CD8-positive, alpha-beta T cell (primary cell): ENCODE measurements at regions of chr17 and their contacts with region 1.

Region 1: DNA sequence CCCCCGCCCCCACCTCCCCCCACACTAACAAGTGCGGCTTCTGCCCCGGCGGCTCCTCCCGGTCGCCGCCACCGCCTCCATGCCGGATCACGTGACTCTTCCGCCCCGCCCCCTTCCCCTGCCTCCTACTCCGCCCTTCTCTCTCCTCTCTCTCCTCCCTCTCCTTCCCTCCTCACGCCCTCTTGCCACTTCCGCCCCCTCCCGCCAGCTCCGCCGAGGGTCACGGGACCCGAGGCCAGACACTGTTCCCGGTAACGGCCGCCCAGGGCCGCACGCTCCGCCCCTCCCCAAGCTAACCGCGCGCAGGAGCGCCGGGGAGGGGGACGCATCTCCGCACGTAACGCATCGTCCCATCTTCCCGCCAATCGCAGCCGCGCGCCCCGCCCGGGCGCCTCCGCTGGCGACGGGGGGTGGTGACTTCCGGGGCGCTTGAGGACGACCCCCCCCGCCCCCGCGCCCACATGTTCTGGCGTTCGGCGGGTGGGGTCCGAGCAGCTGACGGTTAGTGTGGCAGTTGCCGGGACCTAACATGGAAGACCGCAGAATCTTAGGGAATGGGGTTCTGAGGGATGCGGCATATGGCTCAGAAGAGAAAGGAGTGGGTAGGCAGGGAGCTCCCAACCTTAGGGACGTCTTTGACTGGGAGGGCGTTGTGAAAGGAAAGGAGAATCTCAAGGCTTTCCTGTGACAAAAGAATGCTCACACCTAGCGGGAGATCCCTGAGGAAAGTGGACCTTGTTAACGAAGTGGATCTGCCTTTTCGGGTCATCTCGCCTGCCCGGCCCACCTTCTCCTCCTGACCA is at the start of gene USP32:
- DNase-seq: peak; percentile 93 to 99 (median 97)
- ATAC-seq: peak; percentile 87
- H3K4me3 ChIP-seq: peak within 1 kb of the TSS; percentile 86 to 93
- H3K4me3 Mint-ChIP-seq: peak within 1 kb of the TSS; percentile 95
- H3K27ac ChIP-seq: peak within 1 kb of the TSS; percentile 89 to 90
- H3K27ac Mint-ChIP-seq: peak within 1 kb of the TSS; percentile 93
- H3K4me1 ChIP-seq: peaks cover 18% of the 10 kb centered on the region
- H3K4me1 Mint-ChIP-seq: peaks cover 38% of the 10 kb centered on the region
- H3K27me3 ChIP-seq: no peaks in the 10 kb centered on the region
- H3K27me3 Mint-ChIP-seq: no peaks in the 10 kb centered on the region
- CTCF ChIP-seq: no peak
- total RNA-seq, gene USP32: 24.7 to 26.3 TPM

Region 2: GRCh38 chr17:59619293-59620063 is 772.8 kb before region 1 on chr17 and contains the start of gene CLTC:
- CTCF ChIA-PET with region 1: no interaction called
- POLR2A ChIA-PET with region 1: no interaction called
- intact Hi-C with region 1: loop called in 1 of 2 experiments (anchors 10 kb)
- DNase-seq: peak; percentile 83 to 98 (median 90)
- ATAC-seq: peak; percentile 82
- H3K4me3 ChIP-seq: peak within 1 kb of the TSS; percentile 98 to 99
- H3K4me3 Mint-ChIP-seq: peak within 1 kb of the TSS; percentile 96
- H3K27ac ChIP-seq: peak within 1 kb of the TSS; percentile 91 to 99
- H3K27ac Mint-ChIP-seq: peak within 1 kb of the TSS; percentile 98
- H3K4me1 ChIP-seq: peaks cover 37% of the 10 kb centered on the region
- H3K4me1 Mint-ChIP-seq: peaks cover 48% of the 10 kb centered on the region
- H3K27me3 ChIP-seq: no peaks in the 10 kb centered on the region
- H3K27me3 Mint-ChIP-seq: no peaks in the 10 kb centered on the region
- CTCF ChIP-seq: no peak
- total RNA-seq, gene CLTC: 73.4 to 86.0 TPM

Region 3: GRCh38 chr17:59892924-59893676 is 499.1 kb before region 1 on chr17 and contains the starts of genes RPS6KB1 and TUBD1:
- CTCF ChIA-PET with region 1: no interaction called
- POLR2A ChIA-PET with region 1: no interaction called
- intact Hi-C with region 1: loop called in 1 of 2 experiments (anchors 10 kb)
- DNase-seq: peak; percentile 94 to 100 (median 97)
- ATAC-seq: peak; percentile 91
- H3K4me3 ChIP-seq: peak within 1 kb of the TSS; percentile 66 to 82
- H3K4me3 Mint-ChIP-seq: peak within 1 kb of the TSS; percentile 100
- H3K27ac ChIP-seq: peak within 1 kb of the TSS; percentile 89 to 93
- H3K27ac Mint-ChIP-seq: peak within 1 kb of the TSS; percentile 100
- H3K4me1 ChIP-seq: peaks cover 37% of the 10 kb centered on the region
- H3K4me1 Mint-ChIP-seq: peaks cover 56% of the 10 kb centered on the region
- H3K27me3 ChIP-seq: no peaks in the 10 kb centered on the region
- H3K27me3 Mint-ChIP-seq: no peaks in the 10 kb centered on the region
- CTCF ChIP-seq: no peak
- total RNA-seq, gene RPS6KB1: 153 to 171 TPM
- total RNA-seq, gene TUBD1: 9.7 to 11.0 TPM

Region 4: GRCh38 chr17:60372790-60373483 is 19.3 kb before region 1 on chr17:
- CTCF ChIA-PET with region 1: no interaction called
- POLR2A ChIA-PET with region 1: no interaction called
- intact Hi-C with region 1: no loop called
- DNase-seq: no peak
- ATAC-seq: no peak
- H3K4me3 ChIP-seq: no peak overlapping the region
- H3K4me3 Mint-ChIP-seq: no peak overlapping the region
- H3K27ac ChIP-seq: no peak overlapping the region
- H3K27ac Mint-ChIP-seq: no peak overlapping the region
- H3K4me1 ChIP-seq: no peaks in the 10 kb centered on the region
- H3K4me1 Mint-ChIP-seq: peaks cover 16% of the 10 kb centered on the region
- H3K27me3 ChIP-seq: no peaks in the 10 kb centered on the region
- H3K27me3 Mint-ChIP-seq: no peaks in the 10 kb centered on the region
- CTCF ChIP-seq: no peak

Region 5: GRCh38 chr17:60421273-60421934 is 29.2 kb after region 1 on chr17:
- CTCF ChIA-PET with region 1: interaction called, 3 read pairs
- POLR2A ChIA-PET with region 1: interaction called, 3 read pairs
- intact Hi-C with region 1: loop called (anchors 1 to 2 kb)
- DNase-seq: peak; percentile 50 to 84 (median 71)
- ATAC-seq: peak; percentile 93
- H3K4me3 ChIP-seq: peak overlapping the region; percentile 52 to 60
- H3K4me3 Mint-ChIP-seq: peak overlapping the region; percentile 83
- H3K27ac ChIP-seq: peak overlapping the region; percentile 24 to 40
- H3K27ac Mint-ChIP-seq: peak overlapping the region; percentile 72
- H3K4me1 ChIP-seq: peaks cover 8% of the 10 kb centered on the region
- H3K4me1 Mint-ChIP-seq: peaks cover 6% of the 10 kb centered on the region
- H3K27me3 ChIP-seq: no peaks in the 10 kb centered on the region
- H3K27me3 Mint-ChIP-seq: peaks cover 2% of the 10 kb centered on the region
- CTCF ChIP-seq: peak; percentile 100

Region 6: GRCh38 chr17:60535463-60535862 is 143.2 kb after region 1 on chr17:
- CTCF ChIA-PET with region 1: no interaction called
- POLR2A ChIA-PET with region 1: no interaction called
- intact Hi-C with region 1: no loop called
- DNase-seq: no peak
- ATAC-seq: no peak
- H3K4me3 ChIP-seq: no peak overlapping the region
- H3K4me3 Mint-ChIP-seq: no peak overlapping the region
- H3K27ac ChIP-seq: no peak overlapping the region
- H3K27ac Mint-ChIP-seq: no peak overlapping the region
- H3K4me1 ChIP-seq: no peaks in the 10 kb centered on the region
- H3K4me1 Mint-ChIP-seq: no peaks in the 10 kb centered on the region
- H3K27me3 ChIP-seq: no peaks in the 10 kb centered on the region
- H3K27me3 Mint-ChIP-seq: peaks cover 2% of the 10 kb centered on the region
- CTCF ChIP-seq: no peak

Region 7: GRCh38 chr17:60599620-60600489 is 207.6 kb after region 1 on chr17 and contains the start of gene PPM1D:
- CTCF ChIA-PET with region 1: no interaction called
- POLR2A ChIA-PET with region 1: no interaction called
- intact Hi-C with region 1: loop called in 1 of 2 experiments (anchors 1 kb)
- DNase-seq: peak; percentile 92 to 99 (median 98)
- ATAC-seq: peak; percentile 93
- H3K4me3 ChIP-seq: peak within 1 kb of the TSS; percentile 84 to 97
- H3K4me3 Mint-ChIP-seq: peak within 1 kb of the TSS; percentile 94
- H3K27ac ChIP-seq: peak within 1 kb of the TSS; percentile 76 to 96
- H3K27ac Mint-ChIP-seq: peak within 1 kb of the TSS; percentile 94
- H3K4me1 ChIP-seq: peaks cover 11% of the 10 kb centered on the region
- H3K4me1 Mint-ChIP-seq: peaks cover 38% of the 10 kb centered on the region
- H3K27me3 ChIP-seq: no peaks in the 10 kb centered on the region
- H3K27me3 Mint-ChIP-seq: no peaks in the 10 kb centered on the region
- CTCF ChIP-seq: no peak
- total RNA-seq, gene PPM1D: 21.0 to 21.1 TPM

Region 8: GRCh38 chr17:61927200-61928165 is 1535.2 kb after region 1 on chr17 and contains the start of gene INTS2:
- CTCF ChIA-PET with region 1: no interaction called
- POLR2A ChIA-PET with region 1: no interaction called
- intact Hi-C with region 1: loop called in 1 of 2 experiments (anchors 5 kb)
- DNase-seq: peak; percentile 92 to 98 (median 96)
- ATAC-seq: peak; percentile 84
- H3K4me3 ChIP-seq: peak within 1 kb of the TSS; percentile 80 to 91
- H3K4me3 Mint-ChIP-seq: peak within 1 kb of the TSS; percentile 90
- H3K27ac ChIP-seq: peak within 1 kb of the TSS; percentile 71 to 92
- H3K27ac Mint-ChIP-seq: peak within 1 kb of the TSS; percentile 98
- H3K4me1 ChIP-seq: peaks cover 14% of the 10 kb centered on the region
- H3K4me1 Mint-ChIP-seq: peaks cover 22% of the 10 kb centered on the region
- H3K27me3 ChIP-seq: no peaks in the 10 kb centered on the region
- H3K27me3 Mint-ChIP-seq: peaks cover 2% of the 10 kb centered on the region
- CTCF ChIP-seq: no peak
- total RNA-seq, gene INTS2: 9.4 to 9.6 TPM